H1 (cell line): ENCODE measurements at regions of chr15 and their contacts with region 1.

Region 1: DNA sequence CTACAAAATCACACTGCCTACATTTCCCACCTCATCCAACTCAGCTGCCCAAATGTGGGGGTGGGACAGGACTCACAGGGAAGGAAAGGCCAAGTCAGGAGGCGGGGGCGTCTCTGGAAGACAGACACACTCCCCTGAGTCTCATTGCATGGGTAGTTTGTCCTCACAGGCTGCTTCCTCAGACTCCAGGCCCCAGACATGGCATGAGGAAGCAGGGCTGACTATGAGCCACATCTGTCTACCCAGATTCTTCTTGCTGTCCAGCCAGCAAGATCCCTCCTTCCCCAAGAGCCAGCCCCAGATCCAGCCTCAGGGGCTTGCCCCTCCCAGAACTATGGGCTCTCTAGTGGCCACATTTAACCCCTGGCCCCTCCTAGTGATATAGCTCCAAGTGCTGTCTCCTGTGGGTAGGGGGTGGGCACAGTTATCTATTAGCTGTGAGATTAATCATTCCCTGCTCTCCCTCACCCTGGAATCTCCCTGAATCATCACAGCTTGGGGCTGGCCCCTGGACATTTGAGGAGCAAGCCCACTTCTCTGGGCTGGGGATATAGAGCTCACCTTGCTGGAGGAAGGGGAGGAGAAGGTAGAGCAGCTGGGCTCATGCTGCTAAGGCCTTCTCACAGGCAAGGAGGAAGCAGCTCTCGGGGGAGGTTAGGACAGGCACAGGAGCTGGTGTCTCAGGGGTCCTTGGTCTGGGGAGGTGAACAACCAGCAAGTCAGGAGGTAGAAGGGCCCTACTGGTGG is 2.1 kb upstream of the CCDC33 start:
- DNase-seq: no peak
- H3K4me3 ChIP-seq: no peak overlapping the region
- H3K27ac ChIP-seq: no peak overlapping the region
- H3K4me1 ChIP-seq: peaks cover 0 to 16% (median 6%) of the 10 kb centered on the region in 4 experiments; a peak in 6 of 7 replicates
- H3K27me3 ChIP-seq: peaks cover 0 to 13% (median 7%) of the 10 kb centered on the region in 4 experiments; a peak in 3 of 7 replicates
- CTCF ChIP-seq: no peak
- EP300 ChIP-seq: no peak
- POLR2A ChIP-seq: no peak
- RAD21 ChIP-seq: no peak

Region 2: GRCh38 chr15:74222240-74223119 is 11.5 kb before region 1 on chr15:
- CTCF ChIA-PET with region 1: interaction called, 5 read pairs
- POLR2A ChIA-PET with region 1: interaction called, 11 read pairs
- DNase-seq: no peak
- H3K4me3 ChIP-seq: peak overlapping the region in 1 of 4 experiments; percentile 36; a peak in 1 of 8 replicates
- H3K27ac ChIP-seq: no peak overlapping the region
- H3K4me1 ChIP-seq: peaks cover 3 to 45% (median 30%) of the 10 kb centered on the region in 4 experiments
- H3K27me3 ChIP-seq: peaks cover 25 to 92% (median 86%) of the 10 kb centered on the region in 4 experiments
- CTCF ChIP-seq: no peak
- EP300 ChIP-seq: no peak
- POLR2A ChIP-seq: no peak
- RAD21 ChIP-seq: no peak

Region 3: GRCh38 chr15:74245342-74245931 is 11.4 kb after region 1 on chr15:
- CTCF ChIA-PET with region 1: interaction called, 24 read pairs
- POLR2A ChIA-PET with region 1: no interaction called
- DNase-seq: no peak
- H3K4me3 ChIP-seq: peak overlapping the region; percentile 3 to 59 (median 18)
- H3K27ac ChIP-seq: no peak overlapping the region
- H3K4me1 ChIP-seq: peaks cover 0 to 19% (median 14%) of the 10 kb centered on the region in 4 experiments; a peak in 6 of 7 replicates
- H3K27me3 ChIP-seq: peaks cover 0 to 7% (median 2%) of the 10 kb centered on the region in 4 experiments; a peak in 3 of 7 replicates
- CTCF ChIP-seq: no peak
- EP300 ChIP-seq: no peak
- POLR2A ChIP-seq: no peak
- RAD21 ChIP-seq: no peak